ENCODE measurements at regions of chr18 and their contacts with region 1.

Region 1: DNA sequence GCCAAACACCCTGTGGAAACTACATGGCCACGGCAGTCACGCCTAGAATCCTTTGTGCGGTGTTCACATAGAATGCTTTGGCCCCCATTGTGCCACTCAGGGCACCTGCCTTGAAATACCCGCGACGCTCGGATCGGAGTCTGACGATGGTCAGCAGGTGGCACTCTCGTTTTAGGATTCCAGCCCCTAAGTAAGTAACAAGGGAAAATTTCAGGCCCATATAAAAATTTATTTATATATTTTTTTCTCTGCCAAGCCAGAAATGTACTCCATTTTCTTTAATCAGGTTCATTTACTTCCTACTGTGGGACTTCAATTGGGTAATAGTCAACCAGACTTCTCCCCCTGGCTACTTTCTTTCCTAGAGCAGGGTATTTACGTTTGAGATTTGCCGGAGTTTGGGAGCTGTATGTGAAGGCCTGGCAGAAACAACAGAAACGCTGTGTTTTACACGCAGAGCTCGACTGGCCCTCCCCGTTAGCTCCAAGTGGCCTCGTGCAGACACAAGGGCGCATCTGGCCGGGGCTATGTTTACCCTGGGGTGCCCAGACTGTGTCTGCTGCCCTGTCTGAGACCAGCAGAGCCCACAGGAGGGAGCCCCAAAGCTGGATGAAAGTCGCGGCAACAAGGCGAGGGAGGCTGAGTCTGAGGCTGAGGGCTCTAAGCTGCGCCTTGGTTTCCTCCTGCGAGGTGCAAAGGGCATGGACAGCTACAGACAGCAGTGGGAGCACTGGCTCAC is 41.6 kb downstream of the LRRC30 start:
- DNase-seq: peak; percentile 71 to 76 (median 74)
- ATAC-seq: peak; percentile 78 to 88 (median 84)
- H3K4me3 ChIP-seq: peak overlapping the region in 9 of 12 donors; percentile 25 to 45 (median 32)
- H3K27ac ChIP-seq: peak overlapping the region; percentile 64 to 84 (median 78)
- H3K4me1 ChIP-seq: peaks cover 3 to 24% (median 19%) of the 10 kb centered on the region in 12 donors
- H3K27me3 ChIP-seq: no peaks in the 10 kb centered on the region
- CTCF ChIP-seq: peak; percentile 21 to 75 (median 58)
- POLR2A ChIP-seq: no peak

Region 2: DNA sequence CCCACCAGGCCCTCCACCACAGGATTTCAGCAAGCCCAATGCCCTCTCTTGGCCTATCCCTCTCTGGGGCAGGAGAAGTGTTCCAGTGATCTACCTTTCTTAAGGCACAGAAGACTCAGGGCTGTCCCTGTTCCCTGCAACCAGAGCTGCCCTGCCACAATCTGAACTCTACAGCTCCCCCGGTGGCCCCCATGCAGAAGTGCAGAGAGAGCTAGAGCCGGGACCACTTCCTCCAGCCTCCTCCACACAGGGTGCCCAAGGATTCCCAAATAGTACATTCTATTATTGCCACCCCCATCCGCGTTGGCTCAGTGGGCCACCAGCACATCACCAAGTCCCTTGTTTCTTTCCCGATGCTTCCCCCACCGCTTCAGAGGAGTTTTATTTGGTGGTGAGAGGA is 179.9 kb after region 1 on chr18:
- intact Hi-C with region 1: loop called in 9 of 10 experiments (anchors 5 to 10 kb)
- DNase-seq: no peak
- ATAC-seq: peak; percentile 63 to 88 (median 78)
- H3K4me3 ChIP-seq: no peak overlapping the region
- H3K27ac ChIP-seq: no peak overlapping the region
- H3K4me1 ChIP-seq: peaks cover 0 to 13% (median 0%) of the 10 kb centered on the region in 12 donors
- H3K27me3 ChIP-seq: no peaks in the 10 kb centered on the region
- CTCF ChIP-seq: peak; percentile 35 to 74 (median 60)
- POLR2A ChIP-seq: no peak

Region 3: DNA sequence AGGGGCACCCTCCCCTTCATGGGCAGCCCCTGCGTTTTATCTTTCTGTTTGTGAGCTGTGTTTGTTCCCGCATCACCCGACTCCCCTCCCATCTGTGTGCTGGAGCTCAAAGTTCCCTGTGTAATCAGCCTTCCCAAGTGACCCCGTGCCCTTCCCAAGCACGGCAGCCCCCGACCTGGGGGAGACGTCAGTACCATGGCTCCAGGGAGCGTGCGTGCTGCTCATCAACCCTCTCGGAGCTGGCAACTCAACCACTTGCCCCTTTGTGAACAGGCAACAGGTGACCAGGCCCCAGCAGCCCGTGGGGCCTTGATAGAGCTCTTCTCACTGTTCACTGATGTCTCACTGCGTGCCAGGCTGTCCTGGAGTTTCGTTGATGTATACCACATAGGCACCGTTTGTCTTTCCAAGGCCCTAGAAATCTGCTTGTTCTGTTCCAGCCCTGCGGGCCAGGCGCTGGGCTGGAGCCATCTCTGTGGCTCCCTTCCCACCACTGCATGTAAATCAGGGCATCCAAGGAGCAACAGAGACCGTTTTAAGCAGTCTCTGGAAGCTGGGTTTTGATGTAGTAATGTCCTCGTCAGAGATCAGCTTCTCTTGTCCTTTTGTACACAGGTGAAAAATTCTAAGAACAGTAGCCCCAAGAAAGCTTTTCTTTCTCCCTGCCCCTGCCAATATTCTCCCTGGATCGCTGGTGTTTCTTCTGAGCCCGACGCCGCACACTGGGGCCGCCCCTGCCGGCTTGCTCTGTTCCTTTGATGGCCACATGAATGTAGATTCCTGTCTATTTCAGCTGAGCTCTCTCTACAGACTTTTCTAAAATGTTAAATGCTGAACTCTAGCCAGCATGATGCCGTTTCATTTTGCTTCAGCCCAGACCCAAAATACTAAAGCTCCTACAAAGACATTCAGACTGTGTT is 187.6 kb after region 1 on chr18:
- intact Hi-C with region 1: loop called in 6 of 10 experiments (anchors 10 kb)
- DNase-seq: peak; percentile 21 to 64 (median 42)
- ATAC-seq: peak; percentile 16 to 87 (median 46)
- H3K4me3 ChIP-seq: peak overlapping the region in 8 of 12 donors; percentile 13 to 51 (median 28)
- H3K27ac ChIP-seq: peak overlapping the region; percentile 12 to 85 (median 51)
- H3K4me1 ChIP-seq: peaks cover 0 to 40% (median 12%) of the 10 kb centered on the region in 12 donors
- H3K27me3 ChIP-seq: no peaks in the 10 kb centered on the region
- CTCF ChIP-seq: no peak
- POLR2A ChIP-seq: no peak

Region 4: GRCh38 chr18:7755753-7756475 is 483.4 kb after region 1 on chr18:
- intact Hi-C with region 1: loop called in 4 of 10 experiments (anchors 2 to 10 kb)
- DNase-seq: no peak
- ATAC-seq: peak; percentile 41 to 52 (median 48)
- H3K4me3 ChIP-seq: no peak overlapping the region
- H3K27ac ChIP-seq: peak overlapping the region in 3 of 12 donors; percentile 32 to 58 (median 42)
- H3K4me1 ChIP-seq: peaks cover 0 to 91% (median 41%) of the 10 kb centered on the region in 12 donors
- H3K27me3 ChIP-seq: no peaks in the 10 kb centered on the region
- CTCF ChIP-seq: peak in 11 of 12 donors; percentile 14 to 58 (median 37)
- POLR2A ChIP-seq: no peak

Region 5: DNA sequence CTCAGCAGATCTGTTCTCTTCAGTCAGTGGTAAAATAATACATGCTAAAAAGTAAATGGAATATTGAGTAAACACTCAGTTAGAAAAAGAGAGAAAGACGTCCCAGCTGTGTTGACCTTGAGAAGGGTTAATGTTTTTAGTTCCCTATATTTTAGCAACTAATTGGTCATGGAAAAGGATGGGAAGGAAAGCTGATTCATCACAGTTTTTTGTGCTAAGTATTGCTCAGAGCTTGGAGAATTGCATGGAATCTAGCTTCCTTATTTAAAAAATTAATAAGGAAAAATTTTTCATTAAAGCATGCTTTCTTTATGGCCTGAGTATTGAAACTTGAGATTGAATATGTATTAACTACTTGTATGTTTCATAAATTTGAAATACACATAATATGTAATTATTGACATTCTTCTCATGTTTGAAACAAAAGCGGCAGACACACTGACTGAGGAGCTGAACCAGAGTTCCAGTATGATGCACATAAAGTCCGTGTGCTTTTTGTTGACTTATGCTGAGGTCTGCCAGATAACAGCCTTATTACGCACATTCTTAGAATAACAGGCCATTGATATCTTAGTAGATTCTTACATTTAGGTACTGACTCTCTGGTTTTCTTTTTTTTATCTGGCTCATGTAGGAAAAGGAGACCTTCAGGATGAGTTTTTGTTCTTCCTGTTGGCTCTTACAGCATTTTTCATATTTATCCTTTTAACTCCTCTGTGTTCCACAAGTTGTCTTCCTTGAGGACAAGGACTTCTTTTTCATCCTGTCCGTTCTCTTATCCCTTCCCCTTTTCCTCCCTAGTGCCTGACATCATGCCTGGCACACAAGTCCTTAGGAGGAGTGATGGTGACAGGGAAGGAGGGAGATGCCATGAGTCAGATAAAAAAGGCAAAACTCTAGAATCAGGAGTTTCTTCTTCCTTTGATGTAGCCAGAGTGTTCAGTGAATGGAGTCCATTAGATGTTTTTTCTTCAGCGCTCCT is 488.8 kb after region 1 on chr18:
- intact Hi-C with region 1: loop called in 4 of 10 experiments (anchors 2 to 10 kb)
- DNase-seq: no peak
- ATAC-seq: no peak
- H3K4me3 ChIP-seq: no peak overlapping the region
- H3K27ac ChIP-seq: peak overlapping the region in 1 of 12 donors; percentile 2
- H3K4me1 ChIP-seq: peaks cover 0 to 86% (median 36%) of the 10 kb centered on the region in 12 donors
- H3K27me3 ChIP-seq: no peaks in the 10 kb centered on the region
- CTCF ChIP-seq: no peak
- POLR2A ChIP-seq: no peak

Region 6: GRCh38 chr18:8389391-8390340 is 1117.2 kb after region 1 on chr18:
- intact Hi-C with region 1: loop called in 8 of 10 experiments (anchors 5 to 10 kb)
- DNase-seq: peak in 4 of 5 donors; percentile 47 to 67 (median 60)
- ATAC-seq: peak; percentile 81 to 92 (median 84)
- H3K4me3 ChIP-seq: no peak overlapping the region
- H3K27ac ChIP-seq: no peak overlapping the region
- H3K4me1 ChIP-seq: peaks cover 0 to 4% (median 0%) of the 10 kb centered on the region in 12 donors
- H3K27me3 ChIP-seq: no peaks in the 10 kb centered on the region
- CTCF ChIP-seq: peak; percentile 56 to 84 (median 76)
- POLR2A ChIP-seq: no peak